ENCODE measurements at regions of chr16 and their contacts with region 1.

Region 1: DNA sequence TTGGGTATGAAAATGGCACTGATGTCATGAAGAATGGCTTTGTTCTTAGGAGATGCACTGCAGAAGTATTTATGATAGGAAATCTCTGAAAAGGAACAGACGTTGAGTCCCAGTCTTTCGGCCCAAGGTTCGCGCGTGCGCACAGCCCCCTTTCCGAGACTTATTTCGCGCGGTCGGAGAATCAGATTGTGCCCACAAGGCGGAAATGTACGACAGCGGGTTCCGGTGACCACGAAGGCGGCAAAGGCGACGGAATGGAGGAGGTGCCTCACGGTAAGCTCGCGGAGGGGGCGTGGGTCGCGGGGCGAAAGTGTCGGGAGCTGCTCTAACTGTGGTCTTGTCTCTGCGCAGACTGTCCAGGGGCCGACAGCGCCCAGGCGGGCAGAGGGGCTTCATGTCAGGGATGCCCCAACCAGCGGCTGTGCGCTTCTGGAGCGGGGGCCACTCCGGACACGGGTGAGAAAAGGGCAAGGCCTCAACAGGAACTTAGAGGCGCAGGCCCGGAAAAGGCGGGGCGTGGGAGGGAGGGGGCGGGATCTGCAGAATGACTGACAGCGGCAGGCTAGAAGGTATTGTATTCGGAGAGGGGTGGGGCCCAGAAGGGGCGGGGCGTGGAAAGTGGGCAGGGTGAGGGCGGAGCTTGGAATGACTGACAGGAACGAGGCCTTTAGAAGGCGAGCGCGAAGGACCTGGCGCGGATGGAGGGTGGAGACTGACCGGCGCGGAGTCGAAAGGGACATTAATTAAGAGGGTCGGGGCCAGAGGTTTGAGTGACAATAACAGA is at the start of gene NUBP1:
- DNase-seq: peak; percentile 100
- H3K4me3 Mint-ChIP-seq: peak within 1 kb of the TSS; percentile 85
- H3K27ac Mint-ChIP-seq: peak within 1 kb of the TSS; percentile 98
- H3K4me1 Mint-ChIP-seq: peaks cover 45% of the 10 kb centered on the region
- H3K27me3 Mint-ChIP-seq: peaks cover 2% of the 10 kb centered on the region
- total RNA-seq, gene NUBP1: 38.6 and 39.5 TPM in 2 replicates

Region 2: GRCh38 chr16:8963825-8964441 is 1779.9 kb before region 1 on chr16 and contains the start of gene USP7:
- intact Hi-C with region 1: loop called (anchors 5 kb)
- DNase-seq: peak; percentile 98
- H3K4me3 Mint-ChIP-seq: peak within 1 kb of the TSS; percentile 94
- H3K27ac Mint-ChIP-seq: peak within 1 kb of the TSS; percentile 93
- H3K4me1 Mint-ChIP-seq: peaks cover 37% of the 10 kb centered on the region
- H3K27me3 Mint-ChIP-seq: peaks cover 5% of the 10 kb centered on the region
- total RNA-seq, gene USP7: 180 and 186 TPM in 2 replicates

Region 3: DNA sequence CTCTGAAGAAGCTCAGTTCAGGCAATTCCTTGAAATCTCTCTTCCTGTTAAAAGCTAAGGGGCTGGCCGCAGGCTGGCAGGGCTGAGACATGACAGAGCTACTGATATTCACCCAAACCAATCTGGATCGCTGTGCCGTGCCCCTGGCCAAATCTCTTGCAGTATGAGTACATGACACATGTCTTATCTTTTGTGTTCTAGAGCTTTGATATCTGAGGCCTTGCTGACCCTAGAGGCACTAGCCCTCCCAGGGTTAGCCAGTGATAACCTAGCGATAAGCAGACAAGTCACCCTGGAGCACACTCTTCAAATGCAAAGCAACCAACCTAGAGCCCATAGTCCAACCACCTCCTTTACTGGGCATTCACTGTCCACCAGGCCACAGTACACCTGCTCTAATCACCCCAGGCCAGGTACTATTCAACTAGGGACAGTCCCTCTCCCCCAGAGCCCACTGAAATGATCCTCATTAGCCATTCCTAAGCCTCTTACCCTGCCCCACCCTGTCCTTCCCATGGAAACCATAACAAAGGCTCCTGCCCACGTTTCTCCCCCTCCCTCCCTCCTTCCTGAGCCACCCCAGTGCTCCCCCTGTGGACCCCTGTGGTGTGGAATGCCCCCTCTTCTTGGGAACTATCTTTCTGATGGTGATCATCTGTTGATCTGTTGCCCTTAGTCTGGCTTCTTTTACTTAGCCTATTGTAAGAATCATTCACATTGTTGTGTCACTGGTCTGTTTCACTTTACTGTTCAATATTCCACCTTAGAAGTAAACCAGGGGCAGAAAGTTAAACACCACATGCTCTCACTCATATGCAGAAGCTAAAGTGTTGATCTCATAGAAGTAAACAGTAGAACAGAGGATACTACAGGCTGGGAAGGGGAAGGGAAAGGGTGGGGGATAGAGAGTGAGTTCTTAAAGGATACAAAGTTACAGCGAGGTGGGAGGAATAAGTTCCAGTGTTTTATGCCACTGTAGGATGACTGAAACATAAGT is 101.6 kb before region 1 on chr16:
- intact Hi-C with region 1: no loop called
- DNase-seq: no peak
- H3K4me3 Mint-ChIP-seq: no peak overlapping the region
- H3K27ac Mint-ChIP-seq: no peak overlapping the region
- H3K4me1 Mint-ChIP-seq: no peaks in the 10 kb centered on the region
- H3K27me3 Mint-ChIP-seq: peaks cover 2% of the 10 kb centered on the region

Region 4: DNA sequence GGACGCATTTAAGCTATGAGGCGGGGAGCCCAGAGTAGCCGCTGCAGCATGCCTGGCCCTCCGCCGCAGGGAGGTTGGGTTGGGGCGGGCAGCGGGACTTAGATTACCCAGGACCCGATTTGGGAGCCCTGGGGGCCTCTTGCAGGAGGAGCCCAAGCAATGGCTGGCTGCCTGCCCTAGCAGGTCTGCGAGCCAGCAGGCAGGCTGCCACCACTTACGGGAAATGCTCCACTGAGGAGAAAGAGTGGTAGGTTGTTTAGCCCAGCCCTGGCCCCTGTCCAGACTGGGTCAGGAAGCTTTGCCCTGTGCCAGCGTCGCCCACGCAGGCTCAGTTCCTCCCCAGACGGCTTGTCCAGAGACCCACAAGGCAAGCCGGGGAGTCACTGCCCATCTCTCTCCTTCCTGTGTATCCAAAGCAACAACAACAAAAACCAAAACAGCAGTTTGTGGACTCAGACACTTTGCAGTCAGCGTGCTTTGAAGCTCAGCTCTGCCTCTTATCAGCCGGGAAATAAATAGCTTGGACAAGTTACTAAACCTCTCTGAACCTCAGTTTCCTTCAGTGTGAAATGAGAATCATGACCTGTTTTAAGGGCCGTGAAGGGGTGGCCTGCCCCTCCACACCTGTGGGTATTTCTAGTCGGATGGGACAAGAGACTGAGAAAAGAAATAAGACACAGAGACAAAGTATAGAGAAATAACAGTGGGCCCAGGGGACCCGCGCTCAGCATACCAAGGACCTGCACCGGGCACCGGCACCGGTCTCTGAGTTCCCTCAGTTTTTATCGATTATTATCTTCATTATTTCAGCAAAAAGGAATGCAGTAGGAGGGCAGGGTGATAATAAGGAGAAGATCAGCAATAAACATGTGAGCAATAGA is 85.3 kb after region 1 on chr16:
- intact Hi-C with region 1: no loop called
- DNase-seq: no peak
- H3K4me3 Mint-ChIP-seq: no peak overlapping the region
- H3K27ac Mint-ChIP-seq: no peak overlapping the region
- H3K4me1 Mint-ChIP-seq: no peaks in the 10 kb centered on the region
- H3K27me3 Mint-ChIP-seq: peaks cover 13% of the 10 kb centered on the region

Region 5: GRCh38 chr16:10871149-10871991 is 127.6 kb after region 1 on chr16:
- intact Hi-C with region 1: loop called (anchors 2 kb)
- DNase-seq: peak; percentile 87
- H3K4me3 Mint-ChIP-seq: peak overlapping the region; percentile 45
- H3K27ac Mint-ChIP-seq: peak overlapping the region; percentile 85
- H3K4me1 Mint-ChIP-seq: peaks cover 66% of the 10 kb centered on the region
- H3K27me3 Mint-ChIP-seq: peaks cover 25% of the 10 kb centered on the region

Region 6: GRCh38 chr16:10944249-10945064 is 200.7 kb after region 1 on chr16 and contains the start of gene CLEC16A:
- intact Hi-C with region 1: loop called (anchors 2 kb)
- DNase-seq: peak; percentile 99
- H3K4me3 Mint-ChIP-seq: peak within 1 kb of the TSS; percentile 84
- H3K27ac Mint-ChIP-seq: peak within 1 kb of the TSS; percentile 79
- H3K4me1 Mint-ChIP-seq: peaks cover 56% of the 10 kb centered on the region
- H3K27me3 Mint-ChIP-seq: no peaks in the 10 kb centered on the region
- total RNA-seq, gene CLEC16A: 35.9 and 36.2 TPM in 2 replicates

Region 7: GRCh38 chr16:11783319-11784037 is 1039.7 kb after region 1 on chr16:
- intact Hi-C with region 1: loop called (anchors 5 kb)
- DNase-seq: peak; percentile 89
- H3K4me3 Mint-ChIP-seq: peak overlapping the region; percentile 82
- H3K27ac Mint-ChIP-seq: peak overlapping the region; percentile 97
- H3K4me1 Mint-ChIP-seq: peaks cover 61% of the 10 kb centered on the region
- H3K27me3 Mint-ChIP-seq: no peaks in the 10 kb centered on the region

Region 8: GRCh38 chr16:11851294-11852091 is 1107.7 kb after region 1 on chr16 and contains the start of gene RSL1D1:
- intact Hi-C with region 1: loop called (anchors 5 kb)
- DNase-seq: peak; percentile 99
- H3K4me3 Mint-ChIP-seq: peak within 1 kb of the TSS; percentile 99
- H3K27ac Mint-ChIP-seq: peak within 1 kb of the TSS; percentile 98
- H3K4me1 Mint-ChIP-seq: peaks cover 47% of the 10 kb centered on the region
- H3K27me3 Mint-ChIP-seq: no peaks in the 10 kb centered on the region
- total RNA-seq, gene RSL1D1: 375 and 379 TPM in 2 replicates